Activated CD8-positive, alpha-beta T cell treated with anti-CD3 and anti-CD28 coated beads, Interleukin-2, amount 10 ng/mL, durations not matched to agents 7 days and 5 days (primary cell): ENCODE measurements at regions of chr1 and their contacts with region 1.

Region 1: DNA sequence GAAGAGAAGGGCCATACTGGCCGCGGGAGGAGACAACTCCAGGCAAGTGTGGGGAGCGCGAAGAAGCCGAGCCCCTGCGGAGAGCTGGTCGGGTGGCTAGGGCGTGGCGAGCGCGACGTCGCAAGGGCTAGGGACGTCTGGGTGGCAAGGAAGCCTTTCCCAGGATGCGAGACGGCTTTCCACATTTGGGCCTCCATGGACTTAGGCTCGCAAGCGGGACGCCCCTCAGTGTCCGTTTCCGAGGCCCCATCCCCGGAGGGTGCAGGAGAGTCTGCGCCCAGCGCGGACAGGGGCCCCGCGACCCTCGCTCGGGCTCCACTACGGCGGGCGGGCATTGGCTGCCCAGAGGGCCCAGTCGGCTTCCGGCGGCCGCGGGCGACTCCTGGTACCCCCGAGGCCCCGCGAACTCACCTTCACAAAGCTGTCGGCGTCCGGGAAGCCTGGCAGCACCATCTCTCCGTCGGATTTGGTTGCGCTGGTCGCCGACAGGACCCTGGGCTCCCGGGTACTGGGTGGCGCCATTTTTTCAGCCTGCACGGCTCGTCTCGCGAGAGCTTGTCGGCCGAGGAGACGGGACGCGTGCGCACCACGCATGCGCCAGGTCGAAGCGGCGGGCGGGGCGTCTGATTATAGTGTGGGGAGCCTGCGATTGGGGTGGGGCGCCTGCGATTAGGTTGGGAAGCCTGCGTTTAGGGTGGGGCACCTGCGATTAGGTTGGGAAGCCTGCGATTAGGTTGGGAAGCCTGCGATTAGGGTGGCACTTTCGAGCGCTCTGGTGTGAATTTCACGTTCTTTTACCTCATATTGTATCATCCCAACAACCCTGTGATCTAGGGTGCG is at the start of gene EXOSC10:
- DNase-seq: peak; percentile 97
- ATAC-seq: peak; percentile 96
- H3K4me3 Mint-ChIP-seq: peak within 1 kb of the TSS; percentile 91
- H3K27ac Mint-ChIP-seq: peak within 1 kb of the TSS; percentile 96
- H3K4me1 Mint-ChIP-seq: peaks cover 13% of the 10 kb centered on the region
- H3K27me3 Mint-ChIP-seq: no peaks in the 10 kb centered on the region
- total RNA-seq, gene EXOSC10: 86.1 to 89.8 TPM

Region 2: DNA sequence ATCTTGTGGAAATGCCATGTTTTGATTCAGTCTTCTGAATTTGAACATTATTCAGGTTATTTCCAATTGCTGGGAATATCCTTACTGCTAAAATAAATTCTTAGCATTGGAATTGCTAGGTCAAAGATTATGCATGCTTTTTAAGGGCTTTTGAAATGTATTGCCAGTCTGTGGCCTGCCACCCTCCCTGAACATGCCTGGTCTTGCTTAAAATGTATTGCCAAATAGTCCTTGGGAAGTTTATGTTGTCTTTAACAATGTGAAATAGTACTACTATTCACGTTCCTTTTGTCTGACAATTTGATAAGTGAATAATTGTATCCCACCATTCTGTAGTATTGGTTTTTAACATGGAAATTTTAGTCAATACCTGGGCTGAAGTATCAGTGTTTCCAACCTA is 73.5 kb before region 1 on chr1:
- CTCF ChIA-PET with region 1: no interaction called
- POLR2A ChIA-PET with region 1: no interaction called
- DNase-seq: no peak
- ATAC-seq: no peak
- H3K4me3 Mint-ChIP-seq: no peak overlapping the region
- H3K27ac Mint-ChIP-seq: no peak overlapping the region
- H3K4me1 Mint-ChIP-seq: peaks cover 14% of the 10 kb centered on the region
- H3K27me3 Mint-ChIP-seq: no peaks in the 10 kb centered on the region

Region 3: GRCh38 chr1:11059990-11060830 is 39.3 kb before region 1 on chr1 and contains the start of gene SRM:
- CTCF ChIA-PET with region 1: interaction called, 29 read pairs
- POLR2A ChIA-PET with region 1: interaction called, 10 read pairs
- DNase-seq: peak; percentile 91
- ATAC-seq: peak; percentile 94
- H3K4me3 Mint-ChIP-seq: peak within 1 kb of the TSS; percentile 96
- H3K27ac Mint-ChIP-seq: peak within 1 kb of the TSS; percentile 98
- H3K4me1 Mint-ChIP-seq: peaks cover 54% of the 10 kb centered on the region
- H3K27me3 Mint-ChIP-seq: no peaks in the 10 kb centered on the region
- total RNA-seq, gene SRM: 146 to 154 TPM